Right ventricle myocardium inferior (tissue), 1 donor: ENCODE measurements at regions of chr19 and their contacts with region 1.

Region 1: DNA sequence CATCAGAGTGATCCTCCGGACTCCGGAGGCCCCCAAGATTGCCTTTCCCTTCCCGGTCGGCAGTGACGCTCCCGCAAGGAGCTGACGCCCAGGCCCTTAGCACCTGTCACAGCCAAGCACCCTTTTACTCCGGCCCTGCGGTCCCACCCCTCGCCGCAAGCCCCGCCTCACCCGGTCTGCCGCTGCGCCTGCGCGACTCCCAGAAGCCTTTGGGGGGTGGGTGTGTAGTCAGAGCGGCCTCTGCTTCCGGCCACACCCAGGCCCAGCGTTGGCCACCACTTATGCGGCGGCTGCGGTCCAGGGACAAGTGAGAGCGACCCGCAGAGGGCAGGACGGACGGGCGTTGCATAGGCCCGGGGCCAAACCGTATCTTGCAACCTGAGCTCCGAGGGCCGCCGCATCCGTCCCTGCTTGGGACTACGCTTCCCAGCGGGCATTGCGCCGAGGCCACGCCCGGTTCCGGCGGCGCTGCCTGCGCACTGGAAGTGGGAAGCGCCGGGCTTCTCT is 441 bp upstream of the ZFP28 start:
- DNase-seq: peak; percentile 94
- ATAC-seq: peak; percentile 98

Region 2: GRCh38 chr19:56350416-56351045 is 187.8 kb before region 1 on chr19:
- intact Hi-C with region 1: no loop called
- DNase-seq: no peak
- ATAC-seq: no peak

Region 3: DNA sequence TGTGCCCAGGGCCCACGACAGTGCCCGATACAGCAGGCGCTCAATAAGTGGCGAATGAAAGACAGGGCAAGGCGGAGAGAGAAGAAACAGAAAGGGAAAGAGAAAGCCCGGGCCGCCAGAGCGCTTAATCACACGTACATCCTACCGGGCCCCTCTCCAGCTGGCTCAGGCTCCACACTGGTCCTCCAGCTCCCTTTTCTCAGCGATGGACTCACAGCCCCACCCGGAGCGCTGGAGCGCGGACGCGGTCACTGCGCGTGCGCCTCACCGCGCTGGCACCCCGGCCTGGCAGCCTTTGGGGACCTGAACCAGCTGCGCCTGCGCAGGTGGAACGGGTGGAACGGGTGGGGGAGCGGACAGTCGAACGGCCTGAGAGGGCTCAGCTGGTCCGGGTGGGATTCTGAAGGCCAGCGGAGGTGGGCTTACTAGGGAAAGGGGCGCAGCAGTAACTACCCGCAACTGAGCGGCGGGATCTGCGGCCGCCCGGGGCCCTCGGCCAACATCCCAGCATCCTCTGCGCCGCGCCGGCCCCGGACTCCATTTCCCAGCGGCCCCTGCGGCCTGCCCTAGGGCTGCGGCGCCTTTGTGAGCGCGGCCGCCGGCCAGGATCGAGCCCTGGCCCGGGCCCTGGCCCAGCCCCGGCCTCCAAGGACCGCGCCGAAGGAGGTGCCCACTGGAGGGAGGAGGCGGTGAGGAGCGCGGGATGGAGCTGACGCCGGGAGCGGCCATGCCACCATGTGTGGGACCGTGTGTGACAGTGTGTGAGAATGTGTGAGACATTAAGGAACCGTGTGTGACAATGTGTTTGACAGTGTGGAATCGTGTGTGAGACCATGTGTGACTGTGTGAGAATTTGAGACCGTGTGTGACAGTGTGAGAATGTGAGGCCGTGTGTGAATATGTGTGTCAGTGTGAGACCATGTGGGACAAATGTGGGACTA is 134.3 kb before region 1 on chr19 and contains the start of gene ZNF583:
- intact Hi-C with region 1: loop called (anchors 10 kb)
- DNase-seq: peak; percentile 97
- ATAC-seq: peak; percentile 99
- total RNA-seq, gene ZNF583: 5.4 TPM

Region 4: DNA sequence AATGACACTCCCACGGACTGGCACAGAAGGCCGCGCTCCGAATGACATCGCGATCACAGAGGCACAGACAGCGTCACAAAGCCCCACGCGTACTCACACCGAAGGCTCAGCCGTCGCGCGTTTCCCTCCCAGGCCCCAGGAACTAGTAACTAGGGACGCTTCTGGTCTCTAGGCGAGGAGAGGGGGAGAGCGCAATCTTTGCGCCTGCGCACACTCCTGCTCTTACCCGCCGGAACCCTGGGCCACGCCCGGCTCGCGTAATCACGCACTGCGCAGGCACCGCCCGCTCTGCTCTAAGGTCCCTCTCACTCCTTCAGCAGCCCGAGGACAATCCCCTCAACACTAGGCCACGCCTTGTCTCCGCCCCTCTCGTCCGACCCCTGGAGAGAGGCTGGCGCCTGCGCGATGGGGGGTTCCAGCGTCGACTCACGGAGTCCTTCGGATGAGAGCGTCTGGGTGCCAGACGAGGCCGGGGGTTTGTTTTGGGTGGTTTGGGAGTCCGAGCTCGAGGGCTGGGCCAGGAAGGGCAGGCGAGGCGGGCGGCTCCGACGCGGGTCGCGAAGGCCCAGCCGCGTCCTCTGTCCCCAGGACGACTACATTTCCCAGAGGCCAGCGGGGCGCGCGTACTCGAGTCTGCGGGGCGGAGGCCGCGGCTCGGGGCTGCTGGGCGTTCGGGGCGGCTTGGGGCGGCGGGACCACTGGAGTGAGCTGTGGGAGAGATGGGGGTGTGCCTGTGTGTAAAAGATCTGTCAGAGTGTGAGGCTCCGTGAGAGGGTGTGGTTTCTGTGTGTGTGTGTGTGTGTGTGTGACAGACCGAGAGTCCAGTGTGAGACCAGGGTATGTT is 30.6 kb before region 1 on chr19 and contains the start of gene ZNF471:
- intact Hi-C with region 1: loop called (anchors 2 kb)
- DNase-seq: peak; percentile 99
- ATAC-seq: peak; percentile 100
- total RNA-seq, gene ZNF471: 5.2 TPM

Region 5: GRCh38 chr19:56567274-56568120 is 29.2 kb after region 1 on chr19 and contains the start of gene ZNF470:
- intact Hi-C with region 1: loop called (anchors 2 kb)
- DNase-seq: peak; percentile 96
- ATAC-seq: peak; percentile 100
- total RNA-seq, gene ZNF470: 2.9 TPM